ENCODE measurements at regions of chr7 and their contacts with region 1.

Region 1: DNA sequence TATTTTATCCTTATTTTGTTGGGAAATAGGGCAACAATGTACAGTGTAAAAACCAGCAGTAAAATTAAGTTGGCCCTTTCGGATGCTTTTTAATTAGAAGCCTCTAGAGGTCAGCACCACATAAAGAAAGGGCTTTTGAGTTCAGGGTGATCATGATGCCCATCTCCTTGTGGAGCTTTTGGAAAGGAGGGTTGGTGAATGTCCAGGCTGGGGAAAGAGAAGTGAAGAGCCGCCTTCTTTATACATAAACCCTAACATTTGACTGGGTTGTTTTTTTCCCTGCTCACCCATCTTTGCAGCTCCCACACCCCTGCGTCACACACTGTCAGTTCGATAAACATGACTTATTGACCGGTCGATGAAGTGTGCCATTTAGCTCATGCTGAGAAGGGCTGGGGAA is 29.8 kb downstream of the MTURN start:
- DNase-seq: no peak
- ATAC-seq: peak; percentile 69

Region 2: DNA sequence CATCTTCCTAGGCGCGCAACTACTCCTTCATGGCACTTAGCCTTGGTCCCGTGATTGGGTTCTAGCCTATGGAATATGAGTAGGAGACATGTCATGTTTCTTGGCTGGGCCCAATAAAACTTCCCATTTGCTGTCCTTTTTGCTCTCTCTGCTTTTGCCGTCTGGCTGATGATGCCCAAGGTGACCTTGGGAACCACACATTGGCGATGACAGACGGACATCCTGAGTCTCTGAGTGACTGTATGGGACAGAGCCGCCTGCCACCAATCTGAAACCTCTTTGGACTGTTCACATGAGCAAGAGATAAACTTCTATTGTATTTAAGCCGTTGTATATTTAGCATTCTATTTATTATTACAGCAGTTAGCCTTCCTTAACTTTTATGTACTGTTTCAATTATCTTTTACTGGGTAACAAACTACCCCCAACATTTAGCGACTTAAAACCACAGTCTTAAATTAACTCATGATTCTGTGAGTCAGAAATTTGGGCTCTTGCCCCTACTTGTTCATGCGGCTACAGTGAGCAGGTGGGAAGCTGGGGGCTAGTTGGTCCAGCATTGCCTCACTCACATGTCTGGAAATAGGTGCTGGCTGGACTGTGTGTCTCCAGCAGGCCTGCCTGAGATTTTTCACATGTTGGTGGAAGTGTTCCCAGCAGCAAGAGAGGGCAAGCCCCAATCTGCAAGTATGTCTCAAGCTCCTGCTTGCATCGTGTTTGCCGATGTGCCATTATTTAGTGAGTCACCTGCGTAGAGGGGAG is 242.3 kb after region 1 on chr7:
- intact Hi-C with region 1: loop called (anchors 10 kb)
- DNase-seq: peak; percentile 28
- ATAC-seq: peak; percentile 93

Measured in left ventricle myocardium superior (tissue), 1 donor.